Colonic mucosa (tissue), 4 donors: ENCODE measurements at regions of chr12 and their contacts with region 1.

Region 1: GRCh38 chr12:9064201-9064814 is 51.4 kb downstream of the A2M start:
- DNase-seq: peak; percentile 65
- H3K4me3 ChIP-seq: peak overlapping the region; percentile 78
- H3K27ac ChIP-seq: peak overlapping the region; percentile 80
- H3K4me1 ChIP-seq: peaks cover 4% of the 10 kb centered on the region
- H3K27me3 ChIP-seq: no peaks in the 10 kb centered on the region
- CTCF ChIP-seq: peak; percentile 20

Region 2: DNA sequence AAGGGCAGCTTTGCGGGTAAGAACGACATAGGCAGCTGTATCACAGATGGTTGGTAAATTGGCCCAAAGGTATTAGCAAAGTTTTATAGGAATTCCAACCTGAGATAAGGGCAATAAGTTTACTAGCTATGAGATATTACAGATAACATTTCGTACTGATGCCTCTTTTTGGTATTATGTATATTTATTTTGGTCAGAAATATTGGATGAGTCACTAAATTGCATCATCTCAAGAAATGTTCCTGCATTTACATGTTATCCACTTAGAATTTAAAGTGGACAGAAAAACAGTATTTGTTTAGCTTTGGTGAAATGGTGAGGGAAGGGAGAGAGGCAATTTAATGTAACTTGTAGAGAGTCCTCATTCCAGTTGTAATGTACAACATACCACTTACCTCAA is 209.0 kb after region 1 on chr12:
- intact Hi-C with region 1: loop called (anchors 10 kb)
- DNase-seq: no peak
- H3K4me3 ChIP-seq: no peak overlapping the region
- H3K27ac ChIP-seq: no peak overlapping the region
- H3K4me1 ChIP-seq: no peaks in the 10 kb centered on the region
- H3K27me3 ChIP-seq: no peaks in the 10 kb centered on the region
- CTCF ChIP-seq: no peak

Region 3: DNA sequence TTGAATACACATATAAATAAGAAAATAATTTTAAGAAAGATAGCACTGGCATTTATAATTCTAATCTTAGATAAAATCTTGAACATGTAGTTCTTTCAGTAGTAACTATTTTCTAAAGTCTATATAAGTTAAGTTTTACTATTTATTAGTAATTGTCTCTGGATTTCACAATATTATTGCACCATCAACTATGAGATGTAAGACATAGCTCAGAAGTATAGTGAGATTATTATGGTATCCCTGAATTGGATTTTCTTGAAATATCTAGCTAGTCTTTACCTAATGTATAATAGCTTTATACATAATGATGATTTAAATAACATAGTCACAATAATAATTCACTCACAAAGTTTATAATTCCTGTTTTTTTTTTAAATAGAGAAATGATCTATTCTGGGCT is 913.6 kb after region 1 on chr12:
- intact Hi-C with region 1: no loop called
- DNase-seq: no peak
- H3K4me3 ChIP-seq: no peak overlapping the region
- H3K27ac ChIP-seq: no peak overlapping the region
- H3K4me1 ChIP-seq: no peaks in the 10 kb centered on the region
- H3K27me3 ChIP-seq: no peaks in the 10 kb centered on the region
- CTCF ChIP-seq: no peak